Activated CD4-positive, alpha-beta T cell treated with anti-CD3 and anti-CD28 coated beads for 36 hours (primary cell): ENCODE measurements at regions of chr19 and their contacts with region 1.

Region 1: DNA sequence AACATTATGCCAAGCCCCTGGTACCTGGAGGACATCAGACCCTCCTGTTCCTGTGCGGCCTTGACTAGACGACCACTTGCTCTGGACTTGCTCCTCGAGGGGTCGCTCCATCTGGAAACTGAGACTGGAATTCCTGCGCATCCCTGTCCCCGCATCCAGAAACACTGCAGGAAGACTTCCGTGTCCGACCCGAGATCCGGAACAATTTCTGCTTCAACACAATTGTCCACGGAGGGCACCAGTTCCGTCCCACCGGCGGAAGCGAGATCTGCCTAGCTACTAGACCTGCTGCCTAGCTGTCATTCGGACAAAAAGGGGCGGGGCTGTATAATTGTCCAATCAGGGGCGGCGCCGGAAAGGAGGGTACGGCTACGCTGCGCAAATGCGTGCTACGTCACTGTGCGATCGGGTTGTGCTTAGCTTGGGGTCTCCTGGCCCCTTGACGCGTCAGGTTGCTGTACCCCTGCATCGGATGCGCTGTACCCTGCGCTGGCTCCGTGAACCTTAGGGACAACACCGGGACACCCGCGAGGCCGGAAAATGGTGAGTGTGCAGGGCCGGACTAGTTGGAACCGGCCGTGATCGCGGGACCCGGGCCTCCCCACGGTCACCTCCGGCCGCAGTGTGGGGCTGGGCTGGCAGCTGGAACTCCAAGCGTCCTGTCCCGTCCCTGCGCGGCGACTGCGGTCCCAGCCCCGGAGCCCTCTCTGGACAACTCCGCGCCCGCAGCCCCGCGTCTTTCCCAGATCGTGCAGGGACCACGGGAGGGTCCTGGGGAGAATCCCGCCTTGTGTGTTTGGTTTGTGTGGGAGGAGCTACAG is at the starts of genes ZNF490 and ZNF791:
- DNase-seq: peak; percentile 98
- ATAC-seq: peak; percentile 91
- H3K4me3 Mint-ChIP-seq: peak within 1 kb of the TSS; percentile 94
- H3K27ac Mint-ChIP-seq: peak within 1 kb of the TSS; percentile 99
- H3K4me1 Mint-ChIP-seq: peaks cover 31% of the 10 kb centered on the region
- H3K27me3 Mint-ChIP-seq: no peaks in the 10 kb centered on the region
- total RNA-seq, gene ZNF490: 7.7 to 8.7 TPM
- total RNA-seq, gene ZNF791: 16.1 to 18.1 TPM

Region 2: GRCh38 chr19:12564016-12564664 is 46.6 kb before region 1 on chr19:
- CTCF ChIA-PET with region 1: no interaction called
- POLR2A ChIA-PET with region 1: no interaction called
- intact Hi-C with region 1: loop called (anchors 1 to 2 kb)
- DNase-seq: peak; percentile 95
- ATAC-seq: peak; percentile 98
- H3K4me3 Mint-ChIP-seq: peak overlapping the region; percentile 25
- H3K27ac Mint-ChIP-seq: no peak overlapping the region
- H3K4me1 Mint-ChIP-seq: peaks cover 5% of the 10 kb centered on the region
- H3K27me3 Mint-ChIP-seq: no peaks in the 10 kb centered on the region

Region 3: GRCh38 chr19:12666265-12667048 is 55.7 kb after region 1 on chr19 and contains the starts of genes MAN2B1 and WDR83:
- CTCF ChIA-PET with region 1: interaction called, 4 read pairs
- POLR2A ChIA-PET with region 1: interaction called, 5 read pairs
- intact Hi-C with region 1: loop called (anchors 1 to 2 kb)
- DNase-seq: peak; percentile 90
- ATAC-seq: peak; percentile 73
- H3K4me3 Mint-ChIP-seq: peak within 1 kb of the TSS; percentile 86
- H3K27ac Mint-ChIP-seq: peak within 1 kb of the TSS; percentile 83
- H3K4me1 Mint-ChIP-seq: peaks cover 43% of the 10 kb centered on the region
- H3K27me3 Mint-ChIP-seq: no peaks in the 10 kb centered on the region
- total RNA-seq, gene MAN2B1: 118 to 154 TPM
- total RNA-seq, gene WDR83: 13.5 to 19.5 TPM

Region 4: DNA sequence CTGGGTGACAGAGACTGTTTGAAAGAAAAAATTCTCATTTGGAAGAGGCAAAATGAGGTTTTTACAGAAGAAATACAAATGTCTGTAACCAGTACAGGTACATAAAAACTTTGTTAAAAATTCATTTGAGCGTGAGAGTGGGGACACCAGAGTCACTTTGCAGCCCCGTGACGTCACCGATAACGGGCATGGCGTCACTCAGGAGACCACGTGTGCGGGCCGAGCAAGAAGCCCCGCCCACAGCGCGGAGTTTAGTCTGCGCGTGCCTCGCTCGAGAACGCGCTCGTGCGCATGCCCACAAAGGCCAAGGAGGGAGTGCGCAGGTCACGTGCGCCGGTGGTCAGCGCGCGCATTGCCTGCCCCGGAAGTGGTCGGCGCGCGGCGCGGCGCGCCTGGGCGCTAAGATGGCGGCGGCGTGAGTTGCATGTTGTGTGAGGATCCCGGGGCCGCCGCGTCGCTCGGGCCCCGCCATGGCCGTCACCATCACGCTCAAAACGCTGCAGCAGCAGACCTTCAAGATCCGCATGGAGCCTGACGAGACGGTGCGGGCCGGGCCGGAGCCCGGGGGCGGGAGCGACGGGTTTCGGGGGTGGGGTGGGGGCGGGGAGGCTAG is 334.8 kb after region 1 on chr19 and contains the start of gene RAD23A:
- CTCF ChIA-PET with region 1: no interaction called
- POLR2A ChIA-PET with region 1: no interaction called
- intact Hi-C with region 1: loop called in 1 of 2 experiments (anchors 5 kb)
- DNase-seq: peak; percentile 100
- ATAC-seq: peak; percentile 81
- H3K4me3 Mint-ChIP-seq: peak within 1 kb of the TSS; percentile 88
- H3K27ac Mint-ChIP-seq: peak within 1 kb of the TSS; percentile 97
- H3K4me1 Mint-ChIP-seq: peaks cover 55% of the 10 kb centered on the region
- H3K27me3 Mint-ChIP-seq: no peaks in the 10 kb centered on the region
- total RNA-seq, gene RAD23A: 189 to 265 TPM